WTC11 (cell line): ENCODE measurements at regions of chr20 and their contacts with region 1.

Region 1: DNA sequence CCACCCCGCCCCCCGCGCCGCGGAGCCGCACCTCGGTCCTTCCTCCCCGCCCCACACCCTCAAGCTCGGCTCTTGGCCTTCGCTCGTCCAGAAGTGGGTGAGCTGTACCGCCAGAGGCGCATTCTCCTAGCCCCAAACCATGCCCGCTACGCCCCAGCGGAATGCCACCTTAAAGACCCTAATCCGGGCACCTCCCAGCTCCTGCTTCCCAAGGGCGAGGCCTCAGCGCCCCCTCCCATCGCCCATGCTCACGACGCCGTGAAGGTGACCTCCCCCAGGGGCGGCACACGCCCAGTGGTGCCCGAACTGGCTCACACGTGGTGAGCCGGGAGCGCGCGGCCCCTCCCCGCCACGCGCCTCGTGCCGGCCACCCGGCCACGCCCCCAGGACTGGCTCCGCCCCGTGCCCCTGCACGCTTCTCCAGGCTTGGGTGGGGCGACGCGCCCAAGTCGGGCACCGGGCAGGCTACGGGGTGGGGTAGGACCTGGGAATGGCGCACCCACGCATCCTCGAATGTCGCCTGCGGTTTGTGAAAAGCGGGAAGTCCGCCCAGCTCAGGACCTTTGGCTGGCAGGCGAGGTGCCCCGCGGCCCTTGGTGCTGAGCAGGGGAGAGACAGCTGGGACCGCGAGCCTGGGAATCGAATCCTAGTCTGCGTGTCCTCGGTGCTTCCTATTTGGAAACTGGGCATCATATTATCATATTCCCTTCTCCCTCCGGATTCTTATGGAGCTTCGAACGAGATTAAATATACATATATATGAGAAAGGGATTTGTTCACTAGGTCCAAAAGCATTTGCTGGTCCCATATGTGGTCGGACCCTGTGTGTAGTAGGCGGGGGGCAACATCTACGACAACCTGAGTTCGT is 941 bp upstream of the SOX12 start:
- DNase-seq: peak; percentile 91
- ATAC-seq: peak; percentile 31
- H3K4me3 Mint-ChIP-seq: peak overlapping the region; percentile 88
- H3K27ac Mint-ChIP-seq: peak overlapping the region; percentile 100
- H3K4me1 Mint-ChIP-seq: peaks cover 48% of the 10 kb centered on the region
- H3K27me3 Mint-ChIP-seq: no peaks in the 10 kb centered on the region; the same call in 1 of the 2 replicates
- CTCF ChIP-seq: no peak

Region 2: DNA sequence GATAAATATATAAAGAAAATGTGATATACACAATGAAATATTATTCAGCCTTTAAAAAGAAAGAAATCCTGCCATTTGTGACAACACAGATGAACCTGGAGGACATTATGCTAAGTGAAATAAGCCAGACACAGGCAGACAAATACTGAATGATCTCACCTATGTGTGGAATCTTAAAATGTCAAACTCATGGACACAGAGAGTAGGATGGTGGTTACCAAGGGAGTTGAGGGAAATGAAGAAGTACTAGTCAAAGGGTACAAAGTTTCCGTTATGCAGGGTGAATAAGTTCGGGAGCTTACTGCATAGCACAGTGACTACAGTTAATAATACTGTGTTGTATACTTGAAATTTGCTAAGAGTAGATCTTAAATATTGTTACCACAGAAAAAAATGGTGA is 81.5 kb before region 1 on chr20:
- CTCF ChIA-PET with region 1: no interaction called
- POLR2A ChIA-PET with region 1: no interaction called
- DNase-seq: no peak
- ATAC-seq: no peak
- H3K4me3 Mint-ChIP-seq: no peak overlapping the region
- H3K27ac Mint-ChIP-seq: no peak overlapping the region
- H3K4me1 Mint-ChIP-seq: no peaks in the 10 kb centered on the region
- H3K27me3 Mint-ChIP-seq: peaks cover 99% of the 10 kb centered on the region
- CTCF ChIP-seq: no peak

Region 3: DNA sequence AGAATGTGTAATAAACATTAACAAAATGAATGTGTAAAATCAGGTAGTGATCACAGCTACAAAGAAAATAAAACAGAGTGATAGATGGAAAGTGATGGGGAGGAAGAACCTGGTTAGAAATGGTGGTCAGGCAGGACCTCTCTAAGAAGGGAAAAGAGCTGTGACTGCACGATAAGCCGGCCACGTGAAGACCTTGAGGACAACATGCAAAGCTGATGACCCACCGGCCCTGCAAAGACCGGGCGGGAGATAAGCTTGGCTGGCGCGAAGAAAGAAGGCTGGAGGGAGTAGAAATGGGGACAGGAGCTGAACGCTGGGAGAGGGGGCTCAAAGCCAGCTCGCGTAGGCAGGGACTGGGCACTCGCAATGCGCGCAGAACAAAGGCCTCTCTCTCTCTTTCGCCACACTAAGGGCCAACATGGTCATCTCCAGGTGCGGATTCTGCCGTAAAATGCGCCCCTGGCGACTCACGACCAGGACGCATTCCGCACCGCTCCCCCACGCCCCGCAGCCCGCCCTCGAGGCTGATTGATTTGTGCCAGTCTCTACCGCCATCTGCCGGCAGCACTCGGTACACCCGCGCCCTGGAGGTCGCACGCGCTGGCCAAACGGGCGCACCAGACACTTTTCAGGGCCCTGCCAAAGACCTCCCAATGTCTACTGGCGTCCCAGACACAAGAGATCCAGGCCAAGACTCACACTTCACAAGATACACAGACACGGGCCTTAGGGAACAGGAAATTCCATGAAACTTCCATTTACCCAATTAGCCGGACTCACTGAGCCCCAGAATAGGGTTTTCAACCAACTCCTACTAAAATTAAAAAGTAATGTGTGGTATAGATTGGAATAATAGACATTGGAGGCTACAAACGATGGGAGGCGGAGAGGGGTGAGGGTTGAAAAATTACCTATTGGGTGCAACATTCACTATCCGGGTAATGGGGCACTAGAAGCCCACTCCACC is 57.5 kb before region 1 on chr20:
- CTCF ChIA-PET with region 1: interaction called, 12 read pairs
- POLR2A ChIA-PET with region 1: interaction called, 5 read pairs
- DNase-seq: peak; percentile 98
- ATAC-seq: peak; percentile 92
- H3K4me3 Mint-ChIP-seq: peak overlapping the region; percentile 66
- H3K27ac Mint-ChIP-seq: no peak overlapping the region; the same call in 1 of the 2 replicates
- H3K4me1 Mint-ChIP-seq: peaks cover 10% of the 10 kb centered on the region
- H3K27me3 Mint-ChIP-seq: peaks cover 75% of the 10 kb centered on the region
- CTCF ChIP-seq: peak; percentile 90

Region 4: DNA sequence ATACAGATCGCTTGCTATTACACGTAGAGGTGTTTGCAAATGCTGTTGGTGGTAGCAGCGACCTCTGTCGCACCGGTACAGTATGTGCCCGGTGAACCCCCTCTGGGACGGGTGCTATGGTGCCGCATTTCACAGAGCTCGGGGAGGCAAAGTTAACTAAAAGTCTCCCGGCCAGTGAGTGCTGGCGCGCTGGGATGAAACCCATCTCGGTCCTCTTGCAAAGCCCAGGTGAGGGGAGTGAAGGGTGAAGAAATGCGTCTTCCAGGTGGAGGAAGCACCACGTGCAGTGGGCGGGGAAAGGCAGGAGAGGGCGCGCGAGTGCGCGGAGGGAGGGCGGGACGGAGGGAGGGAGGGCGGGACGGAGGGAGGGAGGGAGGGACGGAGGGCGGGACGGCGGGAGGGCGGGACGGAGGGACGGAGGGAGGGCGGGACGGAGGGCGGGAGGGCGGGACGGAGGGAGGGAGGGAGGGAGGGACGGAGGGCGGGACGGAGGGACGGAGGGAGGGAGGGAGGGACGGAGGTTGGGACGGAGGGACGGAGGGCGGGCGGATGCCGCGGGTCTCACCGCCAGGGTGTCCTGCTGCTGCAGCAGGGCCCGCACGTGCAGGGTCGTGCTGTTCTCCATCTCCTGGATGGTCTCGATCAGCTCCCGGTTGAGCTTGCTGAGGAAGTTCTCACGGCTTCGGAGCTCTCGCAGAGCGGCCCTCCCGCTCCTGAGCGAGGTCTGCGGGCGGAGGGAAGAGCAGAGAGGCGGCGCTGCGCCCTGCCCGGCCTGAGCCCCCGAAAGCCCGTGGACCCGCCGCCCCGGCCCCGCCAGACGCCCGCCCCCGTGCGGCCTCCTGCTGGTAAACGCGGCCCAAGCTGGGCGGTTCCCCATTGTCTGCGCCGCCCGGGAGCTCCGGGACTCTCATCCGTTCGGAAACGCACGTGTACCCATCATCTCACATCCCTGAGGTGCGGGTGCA is 45.5 kb before region 1 on chr20:
- CTCF ChIA-PET with region 1: interaction called, 42 read pairs
- POLR2A ChIA-PET with region 1: interaction called, 22 read pairs
- DNase-seq: peak; percentile 75
- ATAC-seq: peak; percentile 79
- H3K4me3 Mint-ChIP-seq: peak overlapping the region; percentile 77
- H3K27ac Mint-ChIP-seq: peak overlapping the region; percentile 98
- H3K4me1 Mint-ChIP-seq: peaks cover 13% of the 10 kb centered on the region
- H3K27me3 Mint-ChIP-seq: peaks cover 27% of the 10 kb centered on the region
- CTCF ChIP-seq: no peak

Region 5: DNA sequence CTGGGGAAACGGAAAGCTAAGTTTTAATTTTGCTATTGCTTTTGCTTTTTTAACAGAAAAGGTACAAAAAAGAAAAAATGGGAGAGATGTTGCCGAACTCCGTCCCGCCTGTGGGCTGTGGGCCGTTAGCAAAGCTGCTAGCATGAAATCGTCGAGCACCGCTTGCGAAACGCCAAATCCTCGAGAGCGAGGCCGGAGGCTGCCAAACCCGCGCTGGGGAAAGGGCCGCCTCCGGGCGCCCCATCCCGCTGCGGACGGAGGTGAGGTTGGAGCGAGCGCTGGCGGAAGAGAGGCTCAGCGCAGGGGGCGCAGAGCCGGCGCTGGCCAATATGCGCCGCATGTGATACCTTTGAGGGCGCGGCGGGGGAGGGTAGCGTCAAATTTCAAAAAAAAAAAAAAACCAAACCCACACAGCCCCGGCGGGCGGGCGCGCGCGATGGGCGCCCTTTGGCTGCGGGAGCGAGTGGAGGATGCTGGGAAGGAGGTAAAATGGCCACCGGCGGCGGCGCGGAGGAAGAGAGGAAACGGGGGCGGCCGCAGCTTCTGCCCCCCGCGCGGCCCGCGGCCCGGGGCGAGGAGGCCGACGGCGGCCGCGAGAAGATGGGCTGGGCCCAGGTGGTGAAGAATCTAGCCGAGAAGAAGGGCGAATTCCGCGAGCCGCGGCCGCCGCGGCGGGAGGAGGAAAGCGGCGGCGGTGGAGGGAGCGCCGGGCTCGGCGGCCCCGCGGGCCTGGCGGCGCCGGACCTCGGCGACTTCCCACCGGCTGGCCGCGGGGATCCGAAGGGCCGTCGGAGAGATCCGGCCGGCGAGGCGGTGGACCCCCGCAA is 27.1 kb before region 1 on chr20 and contains the start of gene ZCCHC3:
- CTCF ChIA-PET with region 1: interaction called, 55 read pairs
- POLR2A ChIA-PET with region 1: interaction called, 110 read pairs
- DNase-seq: peak; percentile 88
- ATAC-seq: peak; percentile 82
- H3K4me3 Mint-ChIP-seq: peak within 1 kb of the TSS; percentile 100
- H3K27ac Mint-ChIP-seq: peak within 1 kb of the TSS; percentile 100
- H3K4me1 Mint-ChIP-seq: peaks cover 43% of the 10 kb centered on the region
- H3K27me3 Mint-ChIP-seq: peaks cover 37% of the 10 kb centered on the region
- CTCF ChIP-seq: no peak
- total RNA-seq, gene ZCCHC3: 43.6 to 54.1 TPM (median 52.6 TPM) in 3 replicates

Region 6: GRCh38 chr20:309841-310644 is 14.4 kb before region 1 on chr20:
- CTCF ChIA-PET with region 1: interaction called, 39 read pairs
- POLR2A ChIA-PET with region 1: interaction called, 47 read pairs
- DNase-seq: peak; percentile 99
- ATAC-seq: peak; percentile 98
- H3K4me3 Mint-ChIP-seq: peak overlapping the region; percentile 72
- H3K27ac Mint-ChIP-seq: peak overlapping the region; percentile 100
- H3K4me1 Mint-ChIP-seq: peaks cover 36% of the 10 kb centered on the region
- H3K27me3 Mint-ChIP-seq: peaks cover 5% of the 10 kb centered on the region
- CTCF ChIP-seq: no peak

Region 7: DNA sequence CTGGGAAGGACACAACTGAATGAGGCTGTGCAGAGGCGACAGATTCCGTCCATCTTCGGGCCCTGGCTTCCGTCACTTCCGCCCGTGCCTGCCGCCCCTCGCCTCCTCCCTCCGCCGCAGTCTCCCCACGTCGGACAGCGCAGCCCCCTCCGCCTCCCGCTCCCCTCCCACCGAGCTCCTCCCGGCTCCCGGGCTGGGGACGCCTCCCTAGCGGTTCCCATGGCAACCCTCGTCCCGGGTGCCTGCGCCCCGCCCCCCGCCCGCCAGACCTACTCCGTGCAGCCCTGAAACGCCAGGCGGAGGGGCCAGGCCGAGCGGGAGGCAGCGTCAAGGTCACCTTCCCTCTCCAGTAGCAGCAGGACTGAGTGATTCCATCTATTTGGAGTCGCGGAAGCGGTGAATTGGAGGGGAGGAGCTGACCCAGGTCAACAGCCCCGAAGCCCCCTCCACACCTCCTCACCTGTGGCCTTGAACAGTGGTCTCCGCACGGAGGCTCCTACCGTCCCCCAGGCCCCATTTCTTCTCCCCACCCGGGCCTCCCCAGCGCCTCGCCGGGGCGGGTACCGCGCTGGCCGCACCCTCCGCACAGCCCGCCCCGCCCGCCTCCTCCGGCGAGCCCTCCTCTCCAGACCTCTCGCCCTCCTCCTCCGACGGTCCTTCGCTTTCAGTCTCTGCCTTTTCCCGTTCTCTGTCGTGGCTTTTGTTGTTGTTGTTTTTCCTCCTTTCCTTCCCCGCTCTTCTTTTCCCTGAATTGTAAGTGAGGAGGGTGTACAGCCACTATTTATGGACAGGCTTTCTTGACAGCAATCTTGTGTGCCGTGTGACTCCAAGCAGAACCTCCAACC is 23.5 kb after region 1 on chr20:
- CTCF ChIA-PET with region 1: interaction called, 37 read pairs
- POLR2A ChIA-PET with region 1: interaction called, 13 read pairs
- DNase-seq: peak; percentile 97
- ATAC-seq: peak; percentile 80
- H3K4me3 Mint-ChIP-seq: peak overlapping the region; percentile 89
- H3K27ac Mint-ChIP-seq: peak overlapping the region; percentile 93
- H3K4me1 Mint-ChIP-seq: peaks cover 17% of the 10 kb centered on the region
- H3K27me3 Mint-ChIP-seq: peaks cover 15% of the 10 kb centered on the region
- CTCF ChIP-seq: no peak

Region 8: GRCh38 chr20:381581-382290 is 57.3 kb after region 1 on chr20:
- CTCF ChIA-PET with region 1: no interaction called
- POLR2A ChIA-PET with region 1: interaction called, 13 read pairs
- DNase-seq: peak; percentile 50
- ATAC-seq: peak; percentile 49
- H3K4me3 Mint-ChIP-seq: peak overlapping the region; percentile 66
- H3K27ac Mint-ChIP-seq: no peak overlapping the region
- H3K4me1 Mint-ChIP-seq: no peaks in the 10 kb centered on the region
- H3K27me3 Mint-ChIP-seq: peaks cover 25% of the 10 kb centered on the region
- CTCF ChIP-seq: no peak